ENCODE measurements at regions of chr12 and their contacts with region 1.

Region 1: DNA sequence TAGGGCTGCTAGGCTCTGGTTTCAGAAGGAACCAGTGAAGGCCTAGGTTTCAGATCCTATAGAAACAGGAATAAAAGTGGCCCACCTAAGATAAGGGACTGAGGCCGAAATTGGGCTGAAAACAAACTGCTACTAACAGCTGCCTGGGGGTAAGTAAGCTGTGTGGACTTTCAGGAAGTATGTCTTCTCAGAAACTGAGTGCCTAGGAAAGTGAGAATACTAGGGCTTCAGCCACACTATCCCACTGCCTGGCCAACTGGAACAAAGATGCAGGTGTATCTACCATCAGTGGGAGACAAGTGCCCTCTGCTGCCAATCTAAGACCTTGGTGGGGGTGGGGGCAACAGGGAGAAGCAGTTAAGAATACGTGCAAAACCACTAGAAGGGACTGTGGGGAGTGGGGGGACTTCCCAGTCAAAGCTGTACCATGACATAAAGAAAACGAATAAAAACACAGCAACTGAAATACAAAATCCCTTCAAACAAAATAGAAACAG is 82.5 kb downstream of the MED13L start:
- DNase-seq: peak in 13 of 14 experiments; percentile 3 to 85 (median 30)
- ATAC-seq: peak; percentile 95
- H3K4me3 ChIP-seq: no peak overlapping the region
- H3K4me3 Mint-ChIP-seq: peak overlapping the region; percentile 47
- H3K27ac ChIP-seq: no peak overlapping the region
- H3K27ac Mint-ChIP-seq: peak overlapping the region; percentile 40
- H3K4me1 ChIP-seq: peaks cover 21% of the 10 kb centered on the region
- H3K4me1 Mint-ChIP-seq: peaks cover 69% of the 10 kb centered on the region
- H3K27me3 ChIP-seq: no peaks in the 10 kb centered on the region
- H3K27me3 Mint-ChIP-seq: no peaks in the 10 kb centered on the region
- CTCF ChIP-seq: no peak

Region 2: GRCh38 chr12:116164250-116165035 is 30.5 kb before region 1 on chr12:
- CTCF ChIA-PET with region 1: no interaction called
- POLR2A ChIA-PET with region 1: no interaction called
- intact Hi-C with region 1: loop called in 1 of 2 experiments (anchors 5 kb)
- DNase-seq: no peak
- ATAC-seq: no peak
- H3K4me3 ChIP-seq: no peak overlapping the region
- H3K4me3 Mint-ChIP-seq: peak overlapping the region; percentile 25
- H3K27ac ChIP-seq: no peak overlapping the region
- H3K27ac Mint-ChIP-seq: peak overlapping the region; percentile 26
- H3K4me1 ChIP-seq: peaks cover 9% of the 10 kb centered on the region
- H3K4me1 Mint-ChIP-seq: peaks cover 57% of the 10 kb centered on the region
- H3K27me3 ChIP-seq: no peaks in the 10 kb centered on the region
- H3K27me3 Mint-ChIP-seq: no peaks in the 10 kb centered on the region
- CTCF ChIP-seq: no peak

Region 3: DNA sequence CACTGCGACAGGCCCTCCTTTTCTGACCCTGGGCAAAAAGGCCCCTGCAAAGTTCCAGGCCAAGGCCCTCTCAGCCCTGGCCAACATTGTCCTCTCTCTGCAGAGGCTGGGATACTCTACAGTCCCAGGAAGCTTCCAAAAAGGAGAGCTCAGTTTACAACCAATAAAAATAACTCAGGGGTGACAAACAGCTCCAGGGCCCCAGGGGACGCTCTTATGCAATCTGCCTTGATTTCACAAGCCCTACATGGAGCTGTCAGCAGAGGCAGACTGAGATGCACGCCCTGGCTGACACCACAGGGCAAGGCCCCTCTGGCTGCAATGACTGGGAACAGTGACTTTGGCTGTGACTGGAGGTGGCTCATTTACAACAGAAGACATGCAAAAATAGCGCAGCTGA is 211.5 kb after region 1 on chr12:
- CTCF ChIA-PET with region 1: no interaction called
- POLR2A ChIA-PET with region 1: no interaction called
- intact Hi-C with region 1: no loop called
- DNase-seq: peak in 3 of 14 experiments; percentile 15 to 69 (median 59)
- ATAC-seq: no peak
- H3K4me3 ChIP-seq: no peak overlapping the region
- H3K4me3 Mint-ChIP-seq: no peak overlapping the region
- H3K27ac ChIP-seq: no peak overlapping the region
- H3K27ac Mint-ChIP-seq: no peak overlapping the region
- H3K4me1 ChIP-seq: no peaks in the 10 kb centered on the region
- H3K4me1 Mint-ChIP-seq: no peaks in the 10 kb centered on the region
- H3K27me3 ChIP-seq: no peaks in the 10 kb centered on the region
- H3K27me3 Mint-ChIP-seq: no peaks in the 10 kb centered on the region
- CTCF ChIP-seq: no peak

Measured in CD4-positive, alpha-beta T cell (primary cell).